SK-N-SH (cell line): ENCODE measurements at regions of chr2 and their contacts with region 1.

Region 1: GRCh38 chr2:25362049-25362433 is 20.3 kb upstream of the DNMT3A start:
- DNase-seq: peak; percentile 98
- H3K4me3 ChIP-seq: peak overlapping the region; percentile 18 to 30
- H3K27ac ChIP-seq: peak overlapping the region in 1 of 2 experiments; percentile 35; a peak in 1 of 4 replicates
- H3K4me1 ChIP-seq: peaks cover 0 to 24% of the 10 kb centered on the region in 2 experiments; a peak in 2 of 4 replicates
- H3K27me3 ChIP-seq: no peaks in the 10 kb centered on the region
- CTCF ChIP-seq: peak; percentile 98
- EP300 ChIP-seq: no peak
- RAD21 ChIP-seq: peak; percentile 65

Region 2: GRCh38 chr2:25228848-25229278 is 133.2 kb before region 1 on chr2:
- CTCF ChIA-PET with region 1: interaction called, 12 read pairs
- POLR2A ChIA-PET with region 1: no interaction called
- DNase-seq: peak; percentile 98
- H3K4me3 ChIP-seq: no peak overlapping the region; a peak in 1 of 4 replicates
- H3K27ac ChIP-seq: peak overlapping the region in 1 of 2 experiments; percentile 68; a peak in 2 of 4 replicates
- H3K4me1 ChIP-seq: peaks cover 3 to 37% of the 10 kb centered on the region in 2 experiments; a peak in 2 of 4 replicates
- H3K27me3 ChIP-seq: no peaks in the 10 kb centered on the region
- CTCF ChIP-seq: peak; percentile 84
- EP300 ChIP-seq: no peak
- RAD21 ChIP-seq: peak; percentile 72

Region 3: GRCh38 chr2:25314514-25315315 is 47.3 kb before region 1 on chr2:
- CTCF ChIA-PET with region 1: interaction called, 13 read pairs
- POLR2A ChIA-PET with region 1: interaction called, 4 read pairs
- DNase-seq: peak; percentile 97
- H3K4me3 ChIP-seq: no peak overlapping the region
- H3K27ac ChIP-seq: peak overlapping the region in 1 of 2 experiments; percentile 100; a peak in 2 of 4 replicates
- H3K4me1 ChIP-seq: peaks cover 13 to 69% of the 10 kb centered on the region in 2 experiments; a peak in 3 of 4 replicates
- H3K27me3 ChIP-seq: no peaks in the 10 kb centered on the region
- CTCF ChIP-seq: no peak
- EP300 ChIP-seq: peak in 1 of 2 experiments; percentile 62; a peak in 1 of 4 replicates
- RAD21 ChIP-seq: peak; percentile 21; the same call in 1 of the 2 replicates

Region 4: GRCh38 chr2:25337276-25337675 is 24.8 kb before region 1 on chr2:
- CTCF ChIA-PET with region 1: interaction called, 57 read pairs
- POLR2A ChIA-PET with region 1: interaction called, 3 read pairs
- DNase-seq: no peak
- H3K4me3 ChIP-seq: no peak overlapping the region
- H3K27ac ChIP-seq: peak overlapping the region in 1 of 2 experiments; percentile 89; a peak in 1 of 4 replicates
- H3K4me1 ChIP-seq: peaks cover 4 to 76% of the 10 kb centered on the region in 2 experiments; a peak in 2 of 4 replicates
- H3K27me3 ChIP-seq: no peaks in the 10 kb centered on the region
- CTCF ChIP-seq: no peak
- EP300 ChIP-seq: no peak
- RAD21 ChIP-seq: no peak

Region 5: GRCh38 chr2:25349397-25349796 is 12.6 kb before region 1 on chr2:
- CTCF ChIA-PET with region 1: interaction called, 57 read pairs
- POLR2A ChIA-PET with region 1: interaction called, 4 read pairs
- DNase-seq: no peak
- H3K4me3 ChIP-seq: no peak overlapping the region
- H3K27ac ChIP-seq: no peak overlapping the region
- H3K4me1 ChIP-seq: peaks cover 0 to 9% of the 10 kb centered on the region in 2 experiments; a peak in 1 of 4 replicates
- H3K27me3 ChIP-seq: no peaks in the 10 kb centered on the region
- CTCF ChIP-seq: no peak
- EP300 ChIP-seq: no peak
- RAD21 ChIP-seq: no peak

Region 6: GRCh38 chr2:25388491-25388890 is 26.4 kb after region 1 on chr2:
- CTCF ChIA-PET with region 1: interaction called, 31 read pairs
- POLR2A ChIA-PET with region 1: interaction called, 3 read pairs
- DNase-seq: no peak
- H3K4me3 ChIP-seq: no peak overlapping the region
- H3K27ac ChIP-seq: no peak overlapping the region
- H3K4me1 ChIP-seq: no peaks in the 10 kb centered on the region
- H3K27me3 ChIP-seq: no peaks in the 10 kb centered on the region
- CTCF ChIP-seq: no peak
- EP300 ChIP-seq: no peak
- RAD21 ChIP-seq: no peak

Region 7: DNA sequence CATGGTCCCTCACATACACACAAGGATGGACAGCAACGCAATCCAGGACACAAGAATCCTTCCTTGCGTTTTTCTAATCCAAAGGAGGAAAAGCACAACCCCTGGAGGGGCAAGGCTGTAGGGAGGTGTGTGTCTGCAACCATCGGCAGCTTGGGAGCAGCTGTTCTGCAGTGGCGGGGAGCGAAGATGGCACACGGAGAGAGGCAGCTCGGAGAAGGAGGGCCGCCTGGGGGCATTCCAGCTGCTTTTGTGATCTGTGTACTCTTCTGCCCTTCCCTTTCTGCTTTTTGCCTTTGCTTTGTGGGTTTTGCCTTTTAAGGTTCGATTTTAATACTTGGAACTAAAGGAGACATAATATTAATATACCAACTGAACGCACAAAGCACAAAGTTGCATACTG is 116.7 kb after region 1 on chr2:
- CTCF ChIA-PET with region 1: no interaction called
- POLR2A ChIA-PET with region 1: no interaction called
- DNase-seq: no peak
- H3K4me3 ChIP-seq: no peak overlapping the region
- H3K27ac ChIP-seq: no peak overlapping the region
- H3K4me1 ChIP-seq: peaks cover 7 to 8% of the 10 kb centered on the region in 2 experiments
- H3K27me3 ChIP-seq: no peaks in the 10 kb centered on the region
- CTCF ChIP-seq: no peak
- EP300 ChIP-seq: no peak
- RAD21 ChIP-seq: no peak

Region 8: GRCh38 chr2:25521665-25522387 is 159.8 kb after region 1 on chr2:
- CTCF ChIA-PET with region 1: interaction called, 14 read pairs
- POLR2A ChIA-PET with region 1: no interaction called
- DNase-seq: peak; percentile 66
- H3K4me3 ChIP-seq: no peak overlapping the region; a peak in 1 of 4 replicates
- H3K27ac ChIP-seq: peak overlapping the region; percentile 4 to 39; a peak in 2 of 4 replicates
- H3K4me1 ChIP-seq: peaks cover 4% of the 10 kb centered on the region in 2 experiments
- H3K27me3 ChIP-seq: no peaks in the 10 kb centered on the region
- CTCF ChIP-seq: peak; percentile 95
- EP300 ChIP-seq: no peak
- RAD21 ChIP-seq: peak; percentile 94